AG04449 (cell line): ENCODE measurements at regions of chr5 and their contacts with region 1.

Region 1: GRCh38 chr5:80296121-80296520 is 23.7 kb upstream of the SPZ1 start:
- DNase-seq: no peak
- H3K4me3 ChIP-seq: no peak overlapping the region
- CTCF ChIP-seq: no peak

Region 2: GRCh38 chr5:79560771-79561524 is 735.2 kb before region 1 on chr5:
- CTCF ChIA-PET with region 1: no interaction called
- POLR2A ChIA-PET with region 1: no interaction called
- DNase-seq: peak; percentile 53
- H3K4me3 ChIP-seq: no peak overlapping the region
- CTCF ChIP-seq: no peak

Region 3: DNA sequence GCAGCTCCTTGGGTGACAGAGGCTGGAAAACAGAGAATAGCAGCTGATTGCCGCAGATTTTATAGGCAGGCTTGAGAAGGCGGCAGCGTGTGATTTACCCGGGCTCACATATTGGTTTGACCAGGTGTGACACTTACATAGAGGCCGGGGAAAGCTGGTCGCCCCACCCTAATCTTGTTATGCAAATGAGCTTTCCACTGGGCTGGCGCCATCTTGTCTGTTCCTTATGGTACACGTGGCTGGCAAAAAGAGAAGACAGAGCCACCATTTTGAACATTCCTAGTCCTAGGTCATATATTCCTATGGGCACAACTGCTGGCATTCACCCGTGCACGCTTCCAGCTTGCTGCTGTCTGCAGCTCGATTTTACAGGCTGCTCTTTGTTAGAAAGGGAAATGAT is 12.4 kb after region 1 on chr5:
- CTCF ChIA-PET with region 1: interaction called, 18 read pairs
- POLR2A ChIA-PET with region 1: no interaction called
- DNase-seq: no peak
- H3K4me3 ChIP-seq: no peak overlapping the region
- CTCF ChIP-seq: no peak